Head of caudate nucleus (tissue), 42 donors: ENCODE measurements at regions of chr4 and their contacts with region 1.

Region 1: DNA sequence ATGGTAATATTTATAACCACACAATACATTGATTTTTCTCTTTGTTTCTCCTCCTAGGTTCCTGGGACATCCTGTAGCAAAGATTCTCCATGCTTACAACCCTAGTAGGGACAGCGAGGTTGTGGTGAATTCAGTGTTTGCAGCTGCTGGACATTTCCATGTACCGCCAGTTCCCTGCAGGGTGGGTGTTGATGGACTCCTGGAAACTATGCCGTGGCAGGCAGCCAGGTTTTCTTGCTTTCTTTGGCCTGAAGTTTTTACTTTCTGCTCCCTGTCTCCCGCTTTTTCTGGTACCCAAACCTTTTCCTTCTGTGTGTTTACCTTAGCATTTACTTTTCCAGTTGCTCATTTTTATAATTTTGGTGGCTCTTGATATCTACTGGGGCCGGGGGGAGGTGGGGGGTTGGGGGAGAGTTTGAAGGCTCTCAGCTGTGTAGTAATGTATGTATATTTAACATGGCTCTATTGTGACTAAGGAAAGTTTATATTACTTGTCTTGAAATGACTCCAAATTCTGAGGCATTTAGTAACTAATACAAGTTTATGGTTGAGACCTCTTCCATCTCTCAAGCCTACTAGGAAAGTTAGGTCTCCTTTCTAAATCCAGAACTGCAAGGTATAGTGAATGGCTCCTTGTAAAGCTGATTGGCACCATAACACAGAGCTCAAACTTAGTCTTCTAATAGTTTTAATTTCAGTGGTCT is 89.7 kb downstream of the TMEM131L start:
- DNase-seq: no peak

Region 2: GRCh38 chr4:153451911-153452657 is 103.8 kb before region 1 on chr4:
- intact Hi-C with region 1: no loop called
- DNase-seq: peak in 2 of 42 donors; percentile 23 to 32

Region 3: GRCh38 chr4:153466081-153466948 is 89.6 kb before region 1 on chr4 and contains the start of gene TMEM131L:
- intact Hi-C with region 1: loop called (anchors 5 kb)
- DNase-seq: peak; percentile 37 to 90 (median 77)

Region 4: GRCh38 chr4:153750197-153750817 is 194.4 kb after region 1 on chr4:
- intact Hi-C with region 1: no loop called
- DNase-seq: peak in 41 of 42 donors; percentile 41 to 86 (median 72)

Region 5: DNA sequence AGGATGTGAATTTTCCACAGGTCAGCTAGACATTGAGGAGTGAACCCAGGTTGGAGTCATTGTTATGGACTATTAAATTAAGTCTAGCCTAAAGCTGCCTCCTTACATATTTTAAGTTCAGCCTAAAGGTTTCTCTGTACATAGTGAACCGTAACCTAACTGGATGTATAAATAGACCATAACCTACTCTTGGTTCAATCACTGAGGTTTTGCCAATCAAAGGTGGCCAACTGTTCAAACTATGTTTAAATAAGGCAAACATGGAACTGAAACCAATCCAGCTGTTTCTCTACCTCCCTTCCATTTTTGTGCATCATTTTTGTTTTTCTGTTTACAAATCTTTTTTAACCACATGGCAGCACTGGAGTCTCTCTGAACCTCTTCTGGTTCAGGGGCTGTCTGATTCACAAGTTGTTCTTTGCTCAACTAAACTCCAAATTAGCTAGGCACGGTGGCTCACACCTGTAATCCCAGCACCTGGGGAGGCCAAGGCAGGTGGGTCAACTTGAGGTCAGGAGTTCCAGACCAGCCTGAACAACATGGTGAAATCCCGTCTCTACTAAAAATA is 276.9 kb after region 1 on chr4:
- intact Hi-C with region 1: no loop called
- DNase-seq: no peak